ENCODE measurements at regions of chr1 and their contacts with region 1.

Region 1: DNA sequence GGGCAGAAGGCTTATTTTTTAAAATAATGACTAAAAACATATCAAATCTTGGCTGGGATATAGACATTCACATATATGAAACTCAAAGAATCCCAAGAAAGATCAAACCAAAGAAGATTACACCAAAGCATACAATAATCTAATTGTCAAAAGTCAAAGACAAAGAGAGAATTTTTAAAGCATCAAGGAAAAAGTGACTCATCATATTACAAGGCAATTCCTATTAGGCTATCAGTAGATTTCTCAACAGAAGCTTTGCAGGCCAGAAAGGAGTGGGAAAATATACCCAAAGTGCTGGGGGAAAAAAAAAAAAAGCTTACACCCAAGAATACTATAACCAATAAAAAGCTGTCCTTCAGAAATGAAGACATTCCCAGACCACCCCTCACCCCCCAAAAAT is 375.6 kb downstream of the BRINP2 start:
- DNase-seq: no peak
- H3K4me3 ChIP-seq: no peak overlapping the region
- H3K27ac ChIP-seq: no peak overlapping the region
- H3K4me1 ChIP-seq: no peaks in the 10 kb centered on the region
- H3K27me3 ChIP-seq: no peaks in the 10 kb centered on the region
- CTCF ChIP-seq: no peak
- EP300 ChIP-seq: no peak
- POLR2A ChIP-seq: no peak

Region 2: DNA sequence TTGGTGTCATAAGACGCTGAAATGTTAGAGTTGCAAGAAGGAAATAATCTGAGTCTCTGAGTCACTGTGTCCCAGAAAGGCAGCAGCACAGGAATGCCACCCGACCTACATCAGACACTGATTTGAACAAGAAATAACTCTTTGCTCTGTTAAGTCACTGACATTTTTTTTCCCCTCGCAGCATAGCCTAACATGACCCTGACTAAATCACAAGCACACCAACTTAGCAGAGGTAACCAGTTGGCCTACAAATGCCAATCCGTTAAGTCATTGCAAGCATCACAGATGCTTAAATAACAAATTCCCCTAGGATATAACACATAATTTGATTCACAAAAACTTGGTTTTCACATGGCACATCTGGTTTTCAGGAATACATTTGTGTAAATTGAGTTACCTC is 74.3 kb after region 1 on chr1:
- in situ Hi-C with region 1: no loop called
- intact Hi-C with region 1: loop called (anchors 2 kb)
- DNase-seq: no peak
- H3K4me3 ChIP-seq: no peak overlapping the region
- H3K27ac ChIP-seq: no peak overlapping the region
- H3K4me1 ChIP-seq: no peaks in the 10 kb centered on the region
- H3K27me3 ChIP-seq: no peaks in the 10 kb centered on the region
- CTCF ChIP-seq: no peak
- EP300 ChIP-seq: no peak
- POLR2A ChIP-seq: no peak

Measured in transverse colon (tissue), 4 donors.